Heart left ventricle (tissue), 16 donors: ENCODE measurements at regions of chr2 and their contacts with region 1.

Region 1: DNA sequence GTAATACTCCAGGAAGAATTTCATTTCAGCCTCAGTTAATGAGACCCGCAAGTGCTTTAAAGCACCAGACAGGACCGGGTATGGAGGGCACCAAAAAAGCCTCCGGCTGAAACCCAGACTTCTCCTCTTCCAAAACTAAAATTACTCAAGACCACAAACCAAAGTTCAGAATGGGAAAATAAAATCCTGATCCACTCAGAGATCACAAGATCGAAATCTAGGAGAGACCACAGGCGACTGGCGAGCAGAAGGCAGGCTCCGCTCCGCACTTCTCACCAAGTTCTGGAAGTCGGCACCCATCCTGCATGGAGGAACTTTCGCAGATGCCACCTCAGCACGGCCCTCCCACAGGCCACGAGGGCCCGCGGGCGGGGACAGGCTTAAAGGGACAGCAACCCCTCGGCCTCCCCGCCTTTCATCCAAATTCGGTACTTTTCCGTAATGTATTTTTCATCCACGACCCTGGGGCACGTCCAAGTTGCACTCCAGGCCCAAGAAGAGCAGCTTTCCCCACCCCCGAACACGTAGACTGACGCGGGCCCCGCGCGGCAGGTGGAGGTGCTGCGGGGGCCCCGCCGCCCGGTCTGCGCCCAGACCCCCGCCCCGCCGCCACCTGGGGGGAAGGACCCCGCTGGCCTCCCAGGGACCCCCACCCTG is 43.7 kb downstream of the HDLBP start:
- DNase-seq: peak; percentile 85 to 91 (median 87)
- ATAC-seq: peak; percentile 85 to 91 (median 90)
- H3K4me3 ChIP-seq: peak overlapping the region; percentile 61 to 98 (median 92)
- H3K27ac ChIP-seq: peak overlapping the region; percentile 57 to 97 (median 93)
- H3K4me1 ChIP-seq: peaks cover 0 to 49% (median 37%) of the 10 kb centered on the region in 12 donors
- H3K27me3 ChIP-seq: no peaks in the 10 kb centered on the region
- CTCF ChIP-seq: no peak
- POLR2A ChIP-seq: no peak

Region 2: DNA sequence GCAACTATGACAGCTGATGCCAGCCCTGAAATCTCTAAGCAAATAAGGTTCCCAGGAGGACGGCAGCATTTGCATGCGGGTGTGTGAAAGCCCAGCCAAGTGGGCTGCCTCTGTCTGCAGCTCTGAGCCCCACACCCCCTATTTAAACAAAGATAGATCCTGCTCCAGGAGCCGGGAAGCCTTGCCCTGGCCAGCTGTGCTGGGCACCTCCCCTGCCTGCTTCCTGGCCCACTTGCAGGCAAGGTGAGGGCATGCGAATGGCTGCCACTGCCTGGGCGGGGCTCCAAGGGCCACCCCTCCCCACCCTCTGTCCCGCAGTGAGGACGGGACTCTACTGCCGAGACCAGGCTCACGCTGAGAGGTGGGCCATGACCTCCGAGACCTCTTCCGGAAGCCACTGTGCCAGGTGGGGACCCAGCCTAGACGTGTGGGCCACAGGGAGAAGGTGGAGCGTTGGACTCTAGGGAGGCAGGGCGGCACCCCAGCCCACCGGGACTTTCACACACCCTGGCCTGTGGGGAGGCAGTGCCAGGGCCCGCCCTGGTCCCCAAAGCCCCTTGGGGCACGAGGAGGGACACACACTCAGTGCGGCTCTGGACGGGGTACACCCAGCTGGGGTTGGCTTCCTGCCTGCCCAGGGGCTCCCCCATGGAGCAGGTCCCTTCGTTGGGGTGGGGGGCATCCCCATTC is 83.3 kb before region 1 on chr2 and contains the start of gene ANO7:
- intact Hi-C with region 1: no loop called
- DNase-seq: no peak
- ATAC-seq: peak in 1 of 4 donors; percentile 18
- H3K4me3 ChIP-seq: no peak within 1 kb of the TSS
- H3K27ac ChIP-seq: no peak within 1 kb of the TSS
- H3K4me1 ChIP-seq: no peaks in the 10 kb centered on the region
- H3K27me3 ChIP-seq: no peaks in the 10 kb centered on the region
- CTCF ChIP-seq: no peak
- POLR2A ChIP-seq: no peak
- total RNA-seq, gene ANO7: 0.67 to 3.0 (median 1.8) TPM

Region 3: GRCh38 chr2:241309684-241310117 is 37.9 kb after region 1 on chr2:
- intact Hi-C with region 1: loop called in 4 of 10 experiments (anchors 1 to 5 kb)
- DNase-seq: no peak
- ATAC-seq: peak in 1 of 4 donors; percentile 3
- H3K4me3 ChIP-seq: no peak overlapping the region
- H3K27ac ChIP-seq: peak overlapping the region in 2 of 12 donors; percentile 19 to 61
- H3K4me1 ChIP-seq: peaks cover 0 to 68% (median 38%) of the 10 kb centered on the region in 12 donors
- H3K27me3 ChIP-seq: no peaks in the 10 kb centered on the region
- CTCF ChIP-seq: no peak
- POLR2A ChIP-seq: no peak

Region 4: DNA sequence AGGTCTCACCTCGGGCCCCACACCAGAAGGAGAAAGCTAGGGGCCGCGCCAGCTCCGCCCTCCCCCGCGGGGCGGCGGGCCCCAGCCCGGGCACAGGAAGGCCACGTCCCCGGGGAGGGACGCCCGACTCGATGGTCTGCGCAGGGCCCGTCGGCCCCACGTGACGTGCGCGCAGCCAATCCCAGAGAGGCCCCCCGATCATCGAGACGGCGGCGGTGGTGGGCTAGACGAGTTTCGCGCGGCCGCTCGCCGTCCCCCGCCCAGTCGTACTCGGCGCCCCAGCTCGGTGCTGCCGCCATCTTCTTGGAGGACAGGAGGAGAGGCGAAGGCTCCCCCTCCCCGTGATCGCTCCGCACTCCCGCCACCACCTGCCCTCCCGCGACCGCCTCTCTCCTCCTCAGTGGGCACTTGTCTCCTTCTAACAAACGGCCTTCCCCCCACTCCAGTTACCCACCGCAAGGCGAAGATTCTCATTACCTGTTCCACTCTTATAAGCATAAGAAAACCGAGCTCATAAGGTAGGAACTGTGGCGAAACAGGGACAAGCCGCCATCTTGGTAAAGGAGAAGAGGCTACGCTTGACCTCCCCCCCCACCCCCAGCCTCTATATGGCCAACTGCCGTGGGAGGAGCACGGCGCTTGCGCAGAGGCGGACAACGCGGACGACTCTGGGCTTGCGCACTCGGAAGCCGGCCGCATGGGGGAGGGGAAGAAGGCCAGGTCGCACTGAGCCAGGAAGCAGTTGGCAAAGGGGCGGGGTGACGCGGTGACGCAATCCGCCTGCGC is 43.5 kb after region 1 on chr2 and contains the start of gene HDLBP:
- intact Hi-C with region 1: loop called in 8 of 10 experiments (anchors 1 to 5 kb)
- DNase-seq: peak; percentile 100
- ATAC-seq: peak; percentile 92 to 95 (median 94)
- H3K4me3 ChIP-seq: peak within 1 kb of the TSS; percentile 64 to 93 (median 82)
- H3K27ac ChIP-seq: peak within 1 kb of the TSS; percentile 92 to 100 (median 99)
- H3K4me1 ChIP-seq: peaks cover 4 to 80% (median 53%) of the 10 kb centered on the region in 12 donors
- H3K27me3 ChIP-seq: no peaks in the 10 kb centered on the region
- CTCF ChIP-seq: peak in 9 of 12 donors; percentile 4 to 75 (median 49)
- POLR2A ChIP-seq: peak in 1 of 2 donors; percentile 79
- total RNA-seq, gene HDLBP: 312 to 407 (median 352) TPM